ENCODE measurements at regions of chr2 and their contacts with region 1.

Region 1: GRCh38 chr2:105521205-105521604 is 122.4 kb upstream of the FHL2 start:
- DNase-seq: peak; percentile 47
- H3K4me3 ChIP-seq: no peak overlapping the region
- H3K27ac ChIP-seq: no peak overlapping the region
- H3K4me1 ChIP-seq: no peaks in the 10 kb centered on the region
- H3K27me3 ChIP-seq: no peaks in the 10 kb centered on the region
- CTCF ChIP-seq: peak in 1 of 2 donors; percentile 21
- POLR2A ChIP-seq: no peak

Region 2: DNA sequence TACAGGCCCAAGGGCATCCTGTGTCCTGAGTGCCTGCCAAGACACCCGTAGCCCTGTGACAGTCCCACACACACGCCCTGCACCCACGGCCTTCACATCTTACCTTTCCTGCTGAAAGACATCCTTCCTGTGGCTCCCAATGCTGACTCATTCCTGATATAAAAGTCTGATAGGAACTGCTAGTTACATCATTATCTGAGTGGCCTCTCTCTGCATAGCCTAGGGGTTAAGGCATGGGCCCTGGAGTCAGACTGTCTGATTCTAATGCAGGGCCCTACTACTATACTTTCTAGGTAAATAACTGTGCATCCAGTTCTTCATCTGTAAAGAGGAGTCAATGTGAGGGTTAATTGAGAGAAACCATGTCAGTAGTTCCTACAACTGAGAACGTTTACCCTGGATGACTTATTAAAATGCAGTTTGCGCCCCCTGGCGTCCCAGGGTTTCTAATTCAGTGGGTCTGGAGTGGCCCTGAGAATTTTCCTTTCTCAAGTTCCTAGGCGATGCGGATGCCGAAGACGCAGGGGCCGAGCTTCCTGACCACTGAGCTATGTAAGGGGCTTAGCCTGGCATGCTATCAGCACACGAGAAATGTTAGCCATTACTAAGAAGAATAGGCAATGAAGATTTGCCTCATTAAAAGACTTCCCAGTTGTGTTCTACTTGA is 285.7 kb before region 1 on chr2:
- CTCF ChIA-PET with region 1: no interaction called
- POLR2A ChIA-PET with region 1: no interaction called
- dilution Hi-C with region 1: no loop called
- intact Hi-C with region 1: loop called (anchors 5 kb)
- DNase-seq: peak; percentile 73
- H3K4me3 ChIP-seq: no peak overlapping the region
- H3K27ac ChIP-seq: no peak overlapping the region
- H3K4me1 ChIP-seq: peaks cover 4% of the 10 kb centered on the region
- H3K27me3 ChIP-seq: peaks cover 2 to 7% of the 10 kb centered on the region in 2 experiments
- CTCF ChIP-seq: peak; percentile 70 to 79
- POLR2A ChIP-seq: no peak

Region 3: GRCh38 chr2:105287692-105288091 is 233.5 kb before region 1 on chr2:
- CTCF ChIA-PET with region 1: interaction called, 15 read pairs
- POLR2A ChIA-PET with region 1: no interaction called
- dilution Hi-C with region 1: no loop called
- intact Hi-C with region 1: no loop called
- DNase-seq: peak; percentile 61
- H3K4me3 ChIP-seq: no peak overlapping the region
- H3K27ac ChIP-seq: no peak overlapping the region
- H3K4me1 ChIP-seq: no peaks in the 10 kb centered on the region
- H3K27me3 ChIP-seq: no peaks in the 10 kb centered on the region
- CTCF ChIP-seq: peak; percentile 51 to 58
- POLR2A ChIP-seq: no peak

Region 4: GRCh38 chr2:105369747-105370690 is 151.2 kb before region 1 on chr2:
- CTCF ChIA-PET with region 1: interaction called, 28 read pairs
- POLR2A ChIA-PET with region 1: interaction called, 8 read pairs
- dilution Hi-C with region 1: no loop called
- intact Hi-C with region 1: loop called (anchors 1 kb)
- DNase-seq: peak; percentile 85
- H3K4me3 ChIP-seq: no peak overlapping the region
- H3K27ac ChIP-seq: peak overlapping the region; percentile 25
- H3K4me1 ChIP-seq: peaks cover 24% of the 10 kb centered on the region
- H3K27me3 ChIP-seq: no peaks in the 10 kb centered on the region
- CTCF ChIP-seq: peak; percentile 87 to 89
- POLR2A ChIP-seq: no peak

Region 5: DNA sequence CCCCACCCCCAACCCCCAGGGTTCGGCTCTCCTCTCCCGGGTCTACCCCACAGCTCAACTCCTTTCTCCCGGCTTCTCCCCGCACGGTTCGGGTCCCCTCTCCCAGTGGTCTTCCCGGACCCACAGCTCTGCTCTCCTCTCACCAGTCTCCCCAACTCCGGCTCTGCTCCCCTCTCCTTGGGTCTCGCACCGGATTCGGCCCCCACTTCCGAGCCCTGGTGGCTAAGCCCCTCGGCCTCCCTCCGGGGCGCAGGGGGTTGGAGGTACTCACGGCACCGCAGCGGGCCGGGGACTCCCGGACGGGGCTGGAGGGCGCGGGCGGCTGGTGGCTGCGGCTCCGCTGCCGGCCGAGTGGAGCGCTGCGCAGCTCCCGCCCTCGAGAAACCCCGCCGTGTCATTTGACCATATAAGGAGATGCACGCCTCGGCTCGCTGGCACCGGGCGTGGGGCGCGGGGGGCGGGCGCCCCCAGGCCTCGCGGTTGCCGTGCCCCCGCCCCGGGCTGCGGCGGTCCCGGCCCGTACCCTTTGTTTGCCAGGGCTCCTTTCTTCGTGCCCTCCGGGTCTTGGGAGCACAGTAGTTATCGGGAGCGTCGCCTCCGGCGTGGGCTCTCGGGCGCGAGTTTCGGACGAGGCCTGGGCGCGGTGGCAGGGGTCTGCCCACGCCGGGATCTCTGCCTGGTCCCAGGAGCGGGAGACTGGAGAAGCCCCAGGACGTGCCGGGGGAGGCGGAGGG is 122.3 kb before region 1 on chr2 and contains the start of gene FHL2:
- CTCF ChIA-PET with region 1: interaction called, 31 read pairs
- POLR2A ChIA-PET with region 1: interaction called, 3 read pairs
- dilution Hi-C with region 1: no loop called
- intact Hi-C with region 1: loop called (anchors 1 kb)
- DNase-seq: peak; percentile 77
- H3K4me3 ChIP-seq: peak within 1 kb of the TSS; percentile 59 to 99 (median 99)
- H3K27ac ChIP-seq: peak within 1 kb of the TSS; percentile 92
- H3K4me1 ChIP-seq: peaks cover 43% of the 10 kb centered on the region
- H3K27me3 ChIP-seq: no peaks in the 10 kb centered on the region
- CTCF ChIP-seq: peak; percentile 40 to 62
- POLR2A ChIP-seq: peak; percentile 87
- total RNA-seq, gene FHL2: 178 and 197 TPM in 2 replicates

Region 6: DNA sequence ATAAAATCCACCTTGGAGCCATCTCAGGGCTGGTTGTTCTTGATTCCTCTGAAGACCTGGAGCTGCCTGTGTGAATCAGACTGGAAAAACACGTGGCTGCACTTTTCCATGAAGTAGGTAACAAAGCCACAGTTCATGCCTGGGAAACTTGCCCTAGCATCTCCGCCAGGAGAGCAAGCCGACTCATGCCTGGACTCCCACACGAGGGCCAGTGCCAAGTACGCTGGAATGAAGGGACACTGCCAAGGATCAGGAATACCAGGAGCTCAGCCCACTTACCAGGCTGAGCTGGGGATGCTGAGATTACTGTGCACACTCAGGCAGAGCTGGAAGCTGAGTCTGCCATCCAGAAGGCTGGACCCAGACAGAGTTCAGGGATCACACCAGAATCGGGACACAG is 111.5 kb before region 1 on chr2:
- CTCF ChIA-PET with region 1: interaction called, 24 read pairs
- POLR2A ChIA-PET with region 1: interaction called, 3 read pairs
- dilution Hi-C with region 1: no loop called
- intact Hi-C with region 1: loop called (anchors 2 kb)
- DNase-seq: peak; percentile 91
- H3K4me3 ChIP-seq: no peak overlapping the region
- H3K27ac ChIP-seq: peak overlapping the region; percentile 52
- H3K4me1 ChIP-seq: peaks cover 32% of the 10 kb centered on the region
- H3K27me3 ChIP-seq: peaks cover 0 to 6% of the 10 kb centered on the region in 2 experiments
- CTCF ChIP-seq: no peak
- POLR2A ChIP-seq: no peak

Region 7: DNA sequence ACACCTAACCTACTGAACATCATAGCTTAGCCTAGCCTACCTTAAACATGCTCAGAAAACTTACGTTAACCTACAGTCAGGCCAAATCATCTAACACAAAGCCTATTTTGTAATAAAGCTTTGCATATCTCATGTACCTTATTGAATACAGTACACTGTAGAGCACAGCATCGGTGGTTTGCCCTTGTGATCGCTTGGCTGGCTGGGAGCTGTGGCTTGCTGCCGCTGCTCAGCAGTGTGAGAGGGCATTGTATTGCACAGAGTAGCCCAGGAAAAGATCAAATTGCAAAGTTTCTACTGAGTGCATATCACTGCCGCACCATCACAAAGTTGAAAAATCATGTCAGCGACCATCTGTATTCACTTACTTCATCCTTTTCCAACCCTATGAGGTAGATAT is 161.2 kb after region 1 on chr2:
- CTCF ChIA-PET with region 1: no interaction called
- POLR2A ChIA-PET with region 1: no interaction called
- dilution Hi-C with region 1: no loop called
- intact Hi-C with region 1: no loop called
- DNase-seq: no peak
- H3K4me3 ChIP-seq: no peak overlapping the region
- H3K27ac ChIP-seq: no peak overlapping the region
- H3K4me1 ChIP-seq: no peaks in the 10 kb centered on the region
- H3K27me3 ChIP-seq: no peaks in the 10 kb centered on the region
- CTCF ChIP-seq: no peak
- POLR2A ChIP-seq: no peak